Activated naive CD4-positive, alpha-beta T cell treated with anti-CD3 and anti-CD28 coated beads for 36 hours (primary cell): ENCODE measurements at regions of chr15 and their contacts with region 1.

Region 1: DNA sequence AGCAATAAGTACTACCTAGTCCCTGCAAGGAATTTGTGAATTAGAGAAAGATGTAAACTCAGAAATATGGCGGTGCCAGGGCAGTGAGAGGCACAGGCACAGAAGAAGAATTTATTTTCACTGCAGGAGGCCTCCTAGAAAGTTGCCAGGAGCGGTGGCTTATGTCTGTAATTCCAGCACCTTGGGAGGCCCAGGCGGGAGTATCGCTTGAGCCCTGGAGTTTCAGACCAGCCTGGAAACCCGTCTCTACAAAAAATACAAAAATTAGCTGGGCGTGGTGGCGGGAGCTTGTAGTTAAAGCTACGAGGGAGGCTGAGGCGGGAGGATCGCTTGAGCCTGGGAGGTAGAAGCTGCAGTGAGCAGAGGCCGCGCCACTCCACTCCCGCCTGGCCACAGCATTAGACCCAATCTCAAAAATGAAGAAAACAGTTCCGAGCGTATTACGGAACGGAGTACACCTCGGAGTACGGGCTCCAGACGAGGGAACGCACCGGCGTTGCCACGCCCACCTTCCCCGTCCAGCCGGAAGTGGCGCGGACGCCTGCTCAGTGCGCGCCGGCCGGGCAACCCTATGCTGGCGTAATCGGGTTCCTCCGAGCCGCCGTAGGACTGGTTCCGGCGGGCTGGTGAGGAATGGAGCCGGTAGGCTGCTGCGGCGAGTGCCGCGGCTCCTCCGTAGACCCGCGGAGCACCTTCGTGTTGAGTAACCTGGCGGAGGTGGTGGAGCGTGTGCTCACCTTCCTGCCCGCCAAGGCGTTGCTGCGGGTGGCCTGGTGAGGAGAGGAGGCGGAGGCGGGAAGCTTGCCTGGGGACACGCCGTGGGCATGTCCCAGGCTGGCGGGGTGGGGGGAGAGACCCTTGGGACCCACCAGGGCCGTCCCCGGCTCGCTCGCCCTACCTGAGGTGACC is at the start of gene FBXO22:
- DNase-seq: peak; percentile 95
- H3K4me3 Mint-ChIP-seq: peak within 1 kb of the TSS; percentile 93
- H3K27ac Mint-ChIP-seq: peak within 1 kb of the TSS; percentile 90
- H3K4me1 Mint-ChIP-seq: peaks cover 45% of the 10 kb centered on the region
- H3K27me3 Mint-ChIP-seq: no peaks in the 10 kb centered on the region
- total RNA-seq, gene FBXO22: 97.3 to 99.6 TPM

Region 2: GRCh38 chr15:75843802-75844581 is 59.6 kb before region 1 on chr15:
- CTCF ChIA-PET with region 1: interaction called, 3 read pairs
- intact Hi-C with region 1: loop called (anchors 1 kb)
- DNase-seq: peak; percentile 63
- H3K4me3 Mint-ChIP-seq: peak overlapping the region; percentile 95
- H3K27ac Mint-ChIP-seq: peak overlapping the region; percentile 81
- H3K4me1 Mint-ChIP-seq: peaks cover 37% of the 10 kb centered on the region
- H3K27me3 Mint-ChIP-seq: peaks cover 10% of the 10 kb centered on the region

Region 3: DNA sequence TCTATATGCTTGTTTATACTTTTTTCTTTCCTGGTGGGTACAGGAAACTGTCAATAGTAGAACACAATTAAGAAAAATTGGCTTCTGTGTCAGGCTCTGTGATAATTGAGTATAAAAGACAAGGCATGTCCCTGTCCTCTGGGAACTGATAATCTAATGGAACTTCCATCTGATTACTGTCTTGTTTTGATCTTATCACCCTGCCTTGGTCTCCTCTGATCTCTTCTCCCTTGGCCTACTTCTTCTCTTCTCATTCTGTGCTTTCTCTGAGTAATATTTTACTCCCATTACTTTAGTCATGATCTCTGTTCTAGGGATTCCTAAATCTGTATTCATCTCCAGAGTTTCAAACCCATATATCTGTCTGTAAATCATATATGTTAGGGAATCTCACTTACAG is 45.7 kb before region 1 on chr15:
- CTCF ChIA-PET with region 1: no interaction called
- intact Hi-C with region 1: loop called (anchors 2 kb)
- DNase-seq: no peak
- H3K4me3 Mint-ChIP-seq: no peak overlapping the region
- H3K27ac Mint-ChIP-seq: no peak overlapping the region
- H3K4me1 Mint-ChIP-seq: peaks cover 18% of the 10 kb centered on the region
- H3K27me3 Mint-ChIP-seq: no peaks in the 10 kb centered on the region